ENCODE measurements at regions of chr14 and their contacts with region 1.

Region 1: GRCh38 chr14:96362965-96363756 is at the starts of genes ATG2B and GSKIP:
- DNase-seq: peak; percentile 98
- total RNA-seq, gene ATG2B: 14.2 TPM
- total RNA-seq, gene GSKIP: 14.6 TPM

Region 2: GRCh38 chr14:96252999-96253539 is 110.1 kb before region 1 on chr14:
- intact Hi-C with region 1: no loop called
- DNase-seq: no peak

Region 3: DNA sequence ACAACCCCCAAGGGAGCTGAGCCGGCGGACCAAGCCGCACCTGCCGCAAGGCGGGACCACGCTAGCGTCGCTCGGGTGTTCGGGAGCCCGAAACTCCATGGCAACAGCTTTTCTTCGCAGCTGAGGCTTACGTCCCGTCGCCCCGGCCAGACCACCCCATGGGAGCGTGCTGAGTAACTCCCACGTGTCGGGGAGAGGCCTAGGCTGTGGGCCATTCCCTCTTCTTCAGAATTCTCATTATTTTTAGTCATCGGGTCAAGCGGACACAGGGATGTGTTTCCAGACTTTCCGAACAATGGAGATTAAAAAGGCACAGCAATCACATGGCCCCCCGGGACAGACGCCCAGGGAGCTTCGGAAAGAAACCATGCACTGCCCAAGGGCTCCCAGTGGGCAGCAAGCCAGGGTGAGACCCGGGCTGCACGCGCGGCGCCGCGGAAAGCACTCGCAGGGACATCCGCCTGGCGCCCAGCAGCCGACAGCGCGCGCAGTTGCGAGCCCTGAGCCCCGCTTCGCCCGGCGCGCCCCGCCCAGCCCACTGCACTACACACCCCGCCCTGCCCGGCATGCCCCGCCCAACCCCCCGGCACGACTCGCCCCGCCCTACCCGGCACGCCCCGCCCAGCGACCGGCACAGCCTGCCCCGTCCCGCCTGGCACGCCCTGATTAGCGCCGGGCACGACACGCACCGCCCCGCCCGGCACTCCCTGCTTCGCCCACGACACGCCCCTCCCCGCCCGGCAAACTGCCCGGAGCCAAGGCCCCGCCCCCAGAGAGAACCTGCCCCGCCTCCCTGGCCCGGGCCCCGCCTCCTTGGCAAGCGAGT is 28.3 kb after region 1 on chr14:
- intact Hi-C with region 1: loop called (anchors 1 kb)
- DNase-seq: peak; percentile 99

Region 4: DNA sequence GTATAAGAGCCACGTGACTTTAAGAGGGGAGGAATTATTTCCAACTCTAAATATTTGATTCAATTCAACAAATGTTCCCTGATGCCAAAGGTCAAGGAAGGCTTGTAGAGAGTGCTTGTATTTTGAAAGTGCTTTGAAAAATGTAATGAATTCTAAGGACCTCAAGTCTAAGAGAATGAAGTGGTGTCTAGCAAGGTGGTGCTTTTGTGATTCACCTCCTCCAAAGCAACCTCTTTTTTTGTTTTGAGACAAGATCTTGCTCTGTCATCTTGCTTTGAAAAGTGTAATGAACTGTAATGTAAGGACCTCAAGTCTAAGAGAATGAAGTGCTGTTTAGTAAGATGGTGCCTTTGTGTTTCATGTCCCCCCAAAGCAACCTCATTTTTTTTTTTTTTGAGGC is 42.5 kb after region 1 on chr14:
- intact Hi-C with region 1: no loop called
- DNase-seq: no peak

Region 5: DNA sequence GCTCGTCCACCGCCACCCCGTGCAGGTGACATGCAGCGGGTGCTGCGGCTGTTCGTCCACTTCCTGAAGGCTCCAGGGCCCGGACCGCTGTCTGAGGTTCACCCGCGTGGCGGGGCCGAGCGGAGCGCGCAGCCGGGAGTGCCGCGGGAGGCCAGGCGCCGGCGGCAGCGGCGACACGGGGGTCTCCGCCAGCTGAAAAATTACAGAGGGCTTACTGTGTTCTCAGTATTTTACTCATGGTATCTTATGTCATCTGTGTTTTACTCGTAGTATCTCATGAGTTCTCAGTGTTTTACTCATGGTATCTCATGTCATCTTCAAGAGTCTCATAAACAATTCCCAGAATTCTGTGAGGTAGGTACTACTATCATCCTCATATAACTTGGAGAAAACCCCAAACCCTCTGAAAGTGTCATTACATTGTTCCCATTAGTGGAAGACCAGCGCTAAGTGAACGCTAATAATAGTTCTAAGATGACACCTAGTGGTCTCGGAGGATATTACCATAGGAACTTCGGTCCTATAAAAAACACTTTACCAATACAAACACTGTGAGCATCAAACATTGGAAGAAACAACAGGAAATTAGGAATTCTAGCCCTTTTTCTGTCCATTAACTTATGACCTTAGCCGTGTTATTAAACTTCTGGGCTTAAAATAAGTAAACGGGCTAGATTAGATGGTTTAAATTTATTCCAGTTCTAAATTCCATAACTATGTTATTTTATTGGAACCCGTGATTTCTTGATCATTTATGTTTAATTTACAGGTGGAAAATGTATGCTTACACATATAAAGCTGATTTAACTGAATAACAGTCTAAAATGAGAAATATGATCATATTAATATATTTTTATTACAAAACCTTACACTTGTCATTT is 61.2 kb after region 1 on chr14:
- intact Hi-C with region 1: no loop called
- DNase-seq: no peak

Region 6: GRCh38 chr14:96501742-96502617 is 138.8 kb after region 1 on chr14 and contains the start of gene PAPOLA:
- intact Hi-C with region 1: loop called (anchors 5 kb)
- DNase-seq: peak; percentile 97
- total RNA-seq, gene PAPOLA: 137 TPM

Measured in cardiac septum (tissue), 1 donor.